CD4-positive, alpha-beta T cell (primary cell): ENCODE measurements at regions of chr3 and their contacts with region 1.

Region 1: GRCh38 chr3:111978493-111979433 is at the start of gene ABHD10:
- DNase-seq: peak; percentile 93 to 99 (median 97)
- ATAC-seq: peak; percentile 93
- H3K4me3 ChIP-seq: peak within 1 kb of the TSS; percentile 75
- H3K4me3 Mint-ChIP-seq: peak within 1 kb of the TSS; percentile 95
- H3K27ac ChIP-seq: peak within 1 kb of the TSS; percentile 56 to 74
- H3K27ac Mint-ChIP-seq: peak within 1 kb of the TSS; percentile 94
- H3K4me1 ChIP-seq: peaks cover 11% of the 10 kb centered on the region
- H3K4me1 Mint-ChIP-seq: peaks cover 48% of the 10 kb centered on the region
- H3K27me3 ChIP-seq: no peaks in the 10 kb centered on the region
- H3K27me3 Mint-ChIP-seq: no peaks in the 10 kb centered on the region
- CTCF ChIP-seq: no peak
- total RNA-seq, gene ABHD10: 28.2 to 32.5 TPM

Region 2: GRCh38 chr3:111071257-111072015 is 907.3 kb before region 1 on chr3 and contains the start of gene NECTIN3:
- CTCF ChIA-PET with region 1: no interaction called
- POLR2A ChIA-PET with region 1: no interaction called
- intact Hi-C with region 1: loop called in 1 of 2 experiments (anchors 10 kb)
- DNase-seq: peak; percentile 71 to 95 (median 83)
- ATAC-seq: peak; percentile 93
- H3K4me3 ChIP-seq: peak within 1 kb of the TSS; percentile 78
- H3K4me3 Mint-ChIP-seq: peak within 1 kb of the TSS; percentile 97
- H3K27ac ChIP-seq: no peak within 1 kb of the TSS
- H3K27ac Mint-ChIP-seq: peak within 1 kb of the TSS; percentile 90
- H3K4me1 ChIP-seq: peaks cover 19% of the 10 kb centered on the region
- H3K4me1 Mint-ChIP-seq: peaks cover 44% of the 10 kb centered on the region
- H3K27me3 ChIP-seq: peaks cover 0 to 18% of the 10 kb centered on the region in 2 experiments
- H3K27me3 Mint-ChIP-seq: peaks cover 35% of the 10 kb centered on the region
- CTCF ChIP-seq: no peak
- total RNA-seq, gene NECTIN3: 7.8 to 8.5 TPM

Region 3: DNA sequence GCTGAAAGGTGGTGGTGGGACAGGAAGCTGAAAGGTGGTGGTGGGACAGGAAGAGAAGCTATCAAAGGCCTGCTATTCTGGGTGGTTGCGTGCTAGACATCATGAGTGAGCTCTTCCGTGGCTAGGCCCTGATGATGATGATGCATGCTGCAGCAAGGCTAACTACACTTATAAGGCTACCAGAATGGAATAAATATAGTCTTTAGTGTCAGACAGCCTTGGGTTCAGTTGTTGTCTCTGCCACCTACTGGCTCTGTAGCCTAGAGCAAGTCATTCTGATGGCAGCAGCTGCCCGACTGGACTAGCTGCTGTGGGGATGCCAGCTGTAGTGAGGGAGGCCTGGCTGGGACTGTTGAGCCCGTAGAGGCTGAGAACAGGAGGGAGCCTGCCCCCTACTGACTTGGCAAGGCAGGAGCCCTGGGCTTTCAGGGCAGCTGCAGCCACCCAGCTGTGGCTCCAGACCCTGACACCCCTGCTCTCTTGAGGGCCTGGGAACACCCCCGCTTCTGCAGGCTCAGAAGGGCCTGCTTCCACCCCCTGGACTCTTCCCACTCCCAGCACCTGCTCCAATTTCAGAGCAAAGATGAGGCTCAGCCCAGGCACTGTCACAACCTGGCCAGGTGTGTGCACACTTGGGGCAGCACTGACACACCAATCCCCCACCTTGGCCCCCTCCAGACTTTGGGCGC is 362.2 kb before region 1 on chr3:
- CTCF ChIA-PET with region 1: interaction called, 3 read pairs
- POLR2A ChIA-PET with region 1: interaction called, 11 read pairs
- intact Hi-C with region 1: no loop called
- DNase-seq: peak in 13 of 14 experiments; percentile 16 to 88 (median 46)
- ATAC-seq: peak; percentile 94
- H3K4me3 ChIP-seq: no peak overlapping the region
- H3K4me3 Mint-ChIP-seq: peak overlapping the region; percentile 26
- H3K27ac ChIP-seq: peak overlapping the region; percentile 27 to 60
- H3K27ac Mint-ChIP-seq: peak overlapping the region; percentile 86
- H3K4me1 ChIP-seq: peaks cover 32% of the 10 kb centered on the region
- H3K4me1 Mint-ChIP-seq: peaks cover 60% of the 10 kb centered on the region
- H3K27me3 ChIP-seq: no peaks in the 10 kb centered on the region
- H3K27me3 Mint-ChIP-seq: no peaks in the 10 kb centered on the region
- CTCF ChIP-seq: peak; percentile 31

Region 4: DNA sequence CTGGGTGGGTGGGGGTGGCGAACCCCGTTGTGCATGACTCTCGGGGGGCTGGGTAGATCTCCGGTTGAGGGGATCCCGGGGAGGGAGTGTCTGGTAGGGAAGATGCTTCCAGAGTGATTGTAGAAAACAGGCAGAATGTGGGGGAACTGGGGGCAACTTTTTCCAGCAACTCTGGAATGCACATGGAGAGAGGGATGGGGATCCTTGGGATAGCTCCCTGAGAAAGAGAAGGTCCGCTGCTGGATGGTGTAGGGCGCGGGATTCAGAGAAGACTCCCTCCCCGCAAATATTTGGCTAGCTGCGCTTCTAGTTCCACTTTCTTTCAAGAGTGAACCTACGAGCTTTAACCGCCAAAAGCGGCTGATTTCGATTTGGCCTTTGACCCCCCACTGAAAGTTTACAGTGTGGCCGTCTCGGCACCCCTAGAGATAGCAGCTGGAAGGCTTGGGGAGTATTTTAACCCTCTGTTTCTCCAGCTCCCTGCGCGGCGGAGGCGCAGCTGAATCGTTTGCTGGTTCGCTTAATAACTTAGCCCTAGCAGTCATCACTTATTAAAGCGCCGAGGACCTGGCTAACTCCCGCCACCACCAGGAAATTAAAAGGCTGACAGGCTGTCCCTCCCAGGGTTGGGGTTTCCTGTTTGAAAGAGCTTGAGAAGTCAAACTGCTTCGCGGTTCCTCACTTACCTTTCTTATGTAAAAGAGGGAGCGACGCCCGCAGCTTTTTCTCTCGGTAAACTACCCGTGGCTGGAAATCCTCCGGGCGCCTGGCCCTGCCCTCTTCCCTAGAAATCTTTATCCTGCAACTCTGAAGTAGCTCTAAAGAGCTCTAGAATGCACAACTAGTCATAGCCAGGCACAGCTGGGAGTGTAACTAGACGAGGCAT is 118.5 kb before region 1 on chr3:
- CTCF ChIA-PET with region 1: no interaction called
- POLR2A ChIA-PET with region 1: interaction called, 24 read pairs
- intact Hi-C with region 1: no loop called
- DNase-seq: peak; percentile 12 to 84 (median 34)
- ATAC-seq: peak; percentile 46
- H3K4me3 ChIP-seq: peak overlapping the region; percentile 81
- H3K4me3 Mint-ChIP-seq: peak overlapping the region; percentile 90
- H3K27ac ChIP-seq: peak overlapping the region; percentile 21 to 55
- H3K27ac Mint-ChIP-seq: peak overlapping the region; percentile 81
- H3K4me1 ChIP-seq: peaks cover 20% of the 10 kb centered on the region
- H3K4me1 Mint-ChIP-seq: peaks cover 24% of the 10 kb centered on the region
- H3K27me3 ChIP-seq: peaks cover 0 to 4% of the 10 kb centered on the region in 2 experiments
- H3K27me3 Mint-ChIP-seq: peaks cover 67% of the 10 kb centered on the region
- CTCF ChIP-seq: no peak

Region 5: GRCh38 chr3:111989061-111989678 is 10.4 kb after region 1 on chr3:
- CTCF ChIA-PET with region 1: interaction called, 5 read pairs
- POLR2A ChIA-PET with region 1: interaction called, 41 read pairs
- intact Hi-C with region 1: no loop called
- DNase-seq: peak in 3 of 14 experiments; percentile 54 to 64 (median 61)
- ATAC-seq: peak; percentile 77
- H3K4me3 ChIP-seq: no peak overlapping the region
- H3K4me3 Mint-ChIP-seq: no peak overlapping the region
- H3K27ac ChIP-seq: no peak overlapping the region
- H3K27ac Mint-ChIP-seq: no peak overlapping the region
- H3K4me1 ChIP-seq: no peaks in the 10 kb centered on the region
- H3K4me1 Mint-ChIP-seq: peaks cover 45% of the 10 kb centered on the region
- H3K27me3 ChIP-seq: no peaks in the 10 kb centered on the region
- H3K27me3 Mint-ChIP-seq: no peaks in the 10 kb centered on the region
- CTCF ChIP-seq: peak; percentile 81

Region 6: DNA sequence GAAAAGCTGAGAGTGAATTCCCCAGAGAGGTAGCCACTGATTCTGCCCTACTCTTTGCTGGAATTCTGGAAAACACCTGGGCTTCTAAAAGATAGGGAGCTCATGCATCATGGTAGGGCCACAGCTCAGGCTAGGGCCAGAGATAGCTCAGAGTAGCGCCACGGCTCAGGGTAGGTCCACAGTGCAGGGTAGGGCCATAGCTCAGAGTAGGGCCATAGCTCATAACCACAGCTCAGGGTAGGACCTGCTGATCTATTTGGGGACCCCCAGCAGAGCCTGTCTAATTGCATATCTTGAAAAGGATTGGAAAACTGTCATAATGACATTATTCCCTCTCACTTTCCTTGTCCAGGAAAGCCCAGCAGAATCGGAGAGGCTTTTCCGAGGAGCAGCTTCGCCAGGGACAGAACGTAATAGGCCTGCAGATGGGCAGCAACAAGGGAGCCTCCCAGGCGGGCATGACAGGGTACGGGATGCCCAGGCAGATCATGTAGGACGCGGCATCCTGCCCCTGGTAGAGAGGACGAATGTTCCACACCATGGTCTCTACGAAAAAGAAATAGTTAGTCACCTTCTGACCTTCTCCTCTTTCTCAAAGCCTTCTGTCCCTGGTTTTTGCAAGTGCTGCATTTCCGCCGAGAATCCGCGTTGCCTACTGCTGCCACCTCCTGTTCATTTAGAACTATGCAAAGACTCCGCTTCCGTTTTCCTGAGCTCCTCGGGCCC is 34.5 kb after region 1 on chr3:
- CTCF ChIA-PET with region 1: interaction called, 5 read pairs
- POLR2A ChIA-PET with region 1: interaction called, 15 read pairs
- intact Hi-C with region 1: loop called in 1 of 2 experiments (anchors 5 kb)
- DNase-seq: peak; percentile 19 to 78 (median 46)
- ATAC-seq: peak; percentile 87
- H3K4me3 ChIP-seq: no peak overlapping the region
- H3K4me3 Mint-ChIP-seq: no peak overlapping the region
- H3K27ac ChIP-seq: no peak overlapping the region
- H3K27ac Mint-ChIP-seq: no peak overlapping the region
- H3K4me1 ChIP-seq: peaks cover 8% of the 10 kb centered on the region
- H3K4me1 Mint-ChIP-seq: peaks cover 10% of the 10 kb centered on the region
- H3K27me3 ChIP-seq: no peaks in the 10 kb centered on the region
- H3K27me3 Mint-ChIP-seq: no peaks in the 10 kb centered on the region
- CTCF ChIP-seq: peak; percentile 82

Region 7: GRCh38 chr3:112561731-112562688 is 583.2 kb after region 1 on chr3 and contains the starts of genes ATG3 and SLC35A5:
- CTCF ChIA-PET with region 1: no interaction called
- POLR2A ChIA-PET with region 1: interaction called, 10 read pairs
- intact Hi-C with region 1: no loop called
- DNase-seq: peak; percentile 98 to 100 (median 99)
- ATAC-seq: peak; percentile 75
- H3K4me3 ChIP-seq: peak within 1 kb of the TSS; percentile 85
- H3K4me3 Mint-ChIP-seq: peak within 1 kb of the TSS; percentile 100
- H3K27ac ChIP-seq: peak within 1 kb of the TSS; percentile 94 to 98
- H3K27ac Mint-ChIP-seq: peak within 1 kb of the TSS; percentile 100
- H3K4me1 ChIP-seq: peaks cover 17% of the 10 kb centered on the region
- H3K4me1 Mint-ChIP-seq: peaks cover 73% of the 10 kb centered on the region
- H3K27me3 ChIP-seq: no peaks in the 10 kb centered on the region
- H3K27me3 Mint-ChIP-seq: no peaks in the 10 kb centered on the region
- CTCF ChIP-seq: no peak
- total RNA-seq, gene ATG3: 43.3 to 43.8 TPM
- total RNA-seq, gene SLC35A5: 4.6 to 7.3 TPM